Naive thymus-derived CD4-positive, alpha-beta T cell (primary cell): ENCODE measurements at regions of chrX and their contacts with region 1.

Region 1: GRCh38 chrX:103686199-103687072 is at the start of gene MORF4L2:
- DNase-seq: peak; percentile 42 to 96 (median 89)
- ATAC-seq: peak; percentile 90
- H3K4me3 ChIP-seq: peak within 1 kb of the TSS; percentile 83
- H3K4me3 Mint-ChIP-seq: peak within 1 kb of the TSS in 6 of 10 donors; percentile 69 to 91 (median 82)
- H3K27ac ChIP-seq: peak within 1 kb of the TSS; percentile 94
- H3K27ac Mint-ChIP-seq: peak within 1 kb of the TSS in 5 of 9 donors; percentile 77 to 92 (median 81)
- H3K4me1 ChIP-seq: peaks cover 4 to 13% of the 10 kb centered on the region in 2 donors
- H3K4me1 Mint-ChIP-seq: peaks cover 0 to 23% (median 10%) of the 10 kb centered on the region in 7 donors
- H3K27me3 ChIP-seq: no peaks in the 10 kb centered on the region
- H3K27me3 Mint-ChIP-seq: no peaks in the 10 kb centered on the region
- total RNA-seq, gene MORF4L2: 103 to 177 (median 143) TPM

Region 2: DNA sequence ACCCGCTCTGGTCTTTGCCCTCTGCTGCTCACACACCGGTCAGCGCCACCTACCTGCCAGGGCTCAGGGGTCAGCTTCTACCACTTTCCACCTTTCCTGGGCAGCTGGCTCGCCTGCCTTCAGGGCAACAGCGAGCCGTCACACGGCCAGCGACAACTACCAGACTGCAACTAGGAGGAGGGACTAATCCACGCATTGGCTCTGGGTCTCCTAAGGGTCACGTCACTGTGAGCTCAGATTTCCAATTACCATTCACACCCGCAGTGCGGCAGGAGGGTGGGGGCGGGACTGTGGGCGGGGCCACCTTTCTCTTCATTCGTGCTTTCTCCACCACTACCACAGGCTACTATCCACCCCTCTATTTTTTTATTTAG is 1530.6 kb before region 1 on chrX and contains the start of gene BEX5:
- CTCF ChIA-PET with region 1: no interaction called
- POLR2A ChIA-PET with region 1: no interaction called
- intact Hi-C with region 1: loop called in 1 of 2 experiments (anchors 2 kb)
- DNase-seq: peak in 8 of 9 donors; percentile 20 to 74 (median 62)
- ATAC-seq: peak; percentile 98
- H3K4me3 ChIP-seq: peak within 1 kb of the TSS; percentile 74
- H3K4me3 Mint-ChIP-seq: peak within 1 kb of the TSS; percentile 92 to 99 (median 98)
- H3K27ac ChIP-seq: peak within 1 kb of the TSS; percentile 83
- H3K27ac Mint-ChIP-seq: peak within 1 kb of the TSS; percentile 92 to 99 (median 96)
- H3K4me1 ChIP-seq: no peaks in the 10 kb centered on the region
- H3K4me1 Mint-ChIP-seq: peaks cover 4 to 20% (median 5%) of the 10 kb centered on the region in 7 donors
- H3K27me3 ChIP-seq: no peaks in the 10 kb centered on the region
- H3K27me3 Mint-ChIP-seq: peaks cover 0 to 6% (median 0%) of the 10 kb centered on the region in 5 donors
- total RNA-seq, gene BEX5: 1.8 to 10.1 (median 6.8) TPM

Region 3: GRCh38 chrX:103310542-103311398 is 375.7 kb before region 1 on chrX and contains the start of gene BEX2:
- CTCF ChIA-PET with region 1: no interaction called
- POLR2A ChIA-PET with region 1: no interaction called
- intact Hi-C with region 1: loop called in 1 of 2 experiments (anchors 2 kb)
- DNase-seq: peak; percentile 64 to 87 (median 83)
- ATAC-seq: peak; percentile 100
- H3K4me3 ChIP-seq: peak within 1 kb of the TSS; percentile 78
- H3K4me3 Mint-ChIP-seq: peak within 1 kb of the TSS; percentile 69 to 89 (median 81)
- H3K27ac ChIP-seq: peak within 1 kb of the TSS; percentile 87
- H3K27ac Mint-ChIP-seq: peak within 1 kb of the TSS; percentile 49 to 92 (median 82)
- H3K4me1 ChIP-seq: no peaks in the 10 kb centered on the region
- H3K4me1 Mint-ChIP-seq: peaks cover 0 to 8% (median 6%) of the 10 kb centered on the region in 7 donors
- H3K27me3 ChIP-seq: no peaks in the 10 kb centered on the region
- H3K27me3 Mint-ChIP-seq: no peaks in the 10 kb centered on the region
- total RNA-seq, gene BEX2: 4.8 to 48.5 (median 42.1) TPM

Region 4: DNA sequence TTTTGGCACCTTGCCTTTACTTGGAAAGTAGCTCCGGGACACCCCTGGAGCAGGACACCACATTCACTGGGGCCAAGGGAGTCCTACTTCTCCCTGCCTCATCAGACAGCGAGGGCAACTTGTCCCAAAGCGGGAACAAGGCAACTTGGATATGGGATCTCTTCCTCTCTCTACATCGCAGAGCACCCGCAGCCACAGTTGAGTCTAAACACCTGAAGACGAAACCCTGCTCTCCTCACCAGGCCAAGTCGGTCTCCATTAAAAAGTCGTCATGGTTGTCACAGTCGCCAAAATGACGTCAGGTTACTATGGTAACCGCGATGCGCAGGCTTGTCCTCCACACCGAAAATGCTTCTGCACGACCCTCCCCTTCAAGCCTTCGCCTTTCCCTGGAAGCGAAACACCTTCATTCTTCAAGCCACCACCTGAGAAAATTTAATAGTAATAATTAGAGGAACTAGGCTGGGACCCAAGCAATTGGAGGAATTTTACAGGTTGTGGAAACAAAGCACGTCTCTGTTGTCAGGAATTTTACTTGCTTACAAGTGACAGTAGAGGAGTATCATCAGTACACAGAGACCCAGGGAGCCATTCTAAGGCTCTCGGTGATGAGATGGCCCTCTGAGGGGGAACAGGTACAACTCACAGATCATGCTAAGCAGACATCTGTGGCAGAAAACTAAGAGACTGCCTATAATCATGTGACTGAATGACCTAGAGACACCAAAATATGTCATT is 131.6 kb before region 1 on chrX:
- CTCF ChIA-PET with region 1: no interaction called
- POLR2A ChIA-PET with region 1: no interaction called
- intact Hi-C with region 1: loop called in 1 of 2 experiments (anchors 5 kb)
- DNase-seq: peak; percentile 23 to 75 (median 62)
- ATAC-seq: peak; percentile 79
- H3K4me3 ChIP-seq: peak overlapping the region; percentile 73
- H3K4me3 Mint-ChIP-seq: peak overlapping the region; percentile 85 to 92 (median 90)
- H3K27ac ChIP-seq: peak overlapping the region; percentile 53
- H3K27ac Mint-ChIP-seq: peak overlapping the region; percentile 79 to 97 (median 92)
- H3K4me1 ChIP-seq: no peaks in the 10 kb centered on the region
- H3K4me1 Mint-ChIP-seq: peaks cover 0 to 11% (median 6%) of the 10 kb centered on the region in 7 donors
- H3K27me3 ChIP-seq: no peaks in the 10 kb centered on the region
- H3K27me3 Mint-ChIP-seq: peaks cover 0 to 6% (median 0%) of the 10 kb centered on the region in 5 donors

Region 5: GRCh38 chrX:103565752-103566151 is 120.7 kb before region 1 on chrX:
- CTCF ChIA-PET with region 1: no interaction called
- POLR2A ChIA-PET with region 1: no interaction called
- intact Hi-C with region 1: no loop called
- DNase-seq: no peak
- ATAC-seq: no peak
- H3K4me3 ChIP-seq: no peak overlapping the region
- H3K4me3 Mint-ChIP-seq: no peak overlapping the region
- H3K27ac ChIP-seq: no peak overlapping the region
- H3K27ac Mint-ChIP-seq: no peak overlapping the region
- H3K4me1 ChIP-seq: no peaks in the 10 kb centered on the region
- H3K4me1 Mint-ChIP-seq: no peaks in the 10 kb centered on the region
- H3K27me3 ChIP-seq: no peaks in the 10 kb centered on the region
- H3K27me3 Mint-ChIP-seq: peaks cover 0 to 9% (median 4%) of the 10 kb centered on the region in 5 donors

Region 6: GRCh38 chrX:103629318-103630170 is 56.9 kb before region 1 on chrX:
- CTCF ChIA-PET with region 1: no interaction called
- POLR2A ChIA-PET with region 1: no interaction called
- intact Hi-C with region 1: loop called (anchors 1 to 2 kb)
- DNase-seq: peak in 7 of 9 donors; percentile 3 to 25 (median 11)
- ATAC-seq: peak; percentile 60
- H3K4me3 ChIP-seq: peak overlapping the region; percentile 71
- H3K4me3 Mint-ChIP-seq: peak overlapping the region; percentile 80 to 93 (median 89)
- H3K27ac ChIP-seq: peak overlapping the region; percentile 75
- H3K27ac Mint-ChIP-seq: peak overlapping the region; percentile 17 to 91 (median 81)
- H3K4me1 ChIP-seq: no peaks in the 10 kb centered on the region
- H3K4me1 Mint-ChIP-seq: peaks cover 7 to 19% (median 14%) of the 10 kb centered on the region in 7 donors
- H3K27me3 ChIP-seq: no peaks in the 10 kb centered on the region
- H3K27me3 Mint-ChIP-seq: no peaks in the 10 kb centered on the region

Region 7: DNA sequence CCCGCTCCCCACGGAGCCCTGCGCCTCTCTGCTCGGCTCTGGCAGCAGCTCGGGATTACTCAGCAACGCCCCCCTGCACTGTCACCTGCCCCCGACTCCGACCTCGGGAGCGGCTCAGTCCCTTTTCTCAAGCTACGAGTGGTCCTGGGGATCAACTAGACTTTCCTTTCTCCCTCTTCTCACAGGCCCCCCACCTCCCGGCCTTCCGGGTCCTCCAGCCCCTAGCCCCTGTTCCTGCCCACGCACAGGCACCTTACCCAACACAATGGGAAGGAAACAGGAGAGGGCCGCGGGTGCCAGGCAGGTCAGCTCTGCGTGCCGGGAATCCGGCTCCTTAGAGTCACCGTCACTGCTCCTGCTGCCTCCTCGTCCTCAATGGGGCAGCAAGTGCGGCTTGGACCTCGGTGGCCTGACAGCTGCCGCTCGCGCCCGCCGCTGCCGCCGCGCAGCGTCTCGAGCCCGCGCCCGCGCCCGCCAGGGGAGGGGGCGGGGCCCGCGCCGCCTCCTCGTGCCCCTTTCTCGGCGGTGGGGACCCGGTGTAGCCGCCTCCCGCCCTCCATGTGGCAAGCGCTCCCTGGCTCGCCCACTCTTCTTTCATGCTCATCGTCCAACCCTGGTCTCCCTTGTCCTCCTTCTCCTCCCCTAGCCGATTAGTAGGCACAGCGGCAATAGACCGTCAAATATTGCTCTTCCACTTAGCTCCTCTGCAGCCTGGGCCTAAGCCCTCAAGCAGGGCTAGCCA is 145.5 kb after region 1 on chrX and contains the start of gene RAB9B:
- CTCF ChIA-PET with region 1: no interaction called
- POLR2A ChIA-PET with region 1: interaction called, 3 read pairs
- intact Hi-C with region 1: loop called in 1 of 2 experiments (anchors 5 kb)
- DNase-seq: peak in 8 of 9 donors; percentile 24 to 68 (median 54)
- ATAC-seq: peak; percentile 86
- H3K4me3 ChIP-seq: peak within 1 kb of the TSS; percentile 68
- H3K4me3 Mint-ChIP-seq: peak within 1 kb of the TSS; percentile 84 to 98 (median 92)
- H3K27ac ChIP-seq: peak within 1 kb of the TSS; percentile 18
- H3K27ac Mint-ChIP-seq: peak within 1 kb of the TSS in 5 of 9 donors; percentile 5 to 85 (median 81)
- H3K4me1 ChIP-seq: peaks cover 0 to 5% of the 10 kb centered on the region in 2 donors
- H3K4me1 Mint-ChIP-seq: peaks cover 3 to 8% (median 4%) of the 10 kb centered on the region in 7 donors
- H3K27me3 ChIP-seq: no peaks in the 10 kb centered on the region
- H3K27me3 Mint-ChIP-seq: peaks cover 0 to 26% (median 4%) of the 10 kb centered on the region in 5 donors
- total RNA-seq, gene RAB9B: 0.40 to 0.86 (median 0.51) TPM

Region 8: GRCh38 chrX:104156630-104157529 is 470.4 kb after region 1 on chrX and contains the start of gene SLC25A53:
- CTCF ChIA-PET with region 1: no interaction called
- POLR2A ChIA-PET with region 1: interaction called, 3 read pairs
- intact Hi-C with region 1: loop called in 1 of 2 experiments (anchors 1 kb)
- DNase-seq: peak; percentile 53 to 81 (median 71)
- ATAC-seq: peak; percentile 91
- H3K4me3 ChIP-seq: peak within 1 kb of the TSS; percentile 87
- H3K4me3 Mint-ChIP-seq: peak within 1 kb of the TSS; percentile 87 to 100 (median 98)
- H3K27ac ChIP-seq: peak within 1 kb of the TSS; percentile 85
- H3K27ac Mint-ChIP-seq: peak within 1 kb of the TSS; percentile 97 to 100 (median 99)
- H3K4me1 ChIP-seq: no peaks in the 10 kb centered on the region
- H3K4me1 Mint-ChIP-seq: peaks cover 6 to 25% (median 15%) of the 10 kb centered on the region in 7 donors
- H3K27me3 ChIP-seq: no peaks in the 10 kb centered on the region
- H3K27me3 Mint-ChIP-seq: no peaks in the 10 kb centered on the region
- total RNA-seq, gene SLC25A53: 7.2 to 18.9 (median 10.4) TPM